ENCODE measurements at regions of chr10 and their contacts with region 1.

Region 1: DNA sequence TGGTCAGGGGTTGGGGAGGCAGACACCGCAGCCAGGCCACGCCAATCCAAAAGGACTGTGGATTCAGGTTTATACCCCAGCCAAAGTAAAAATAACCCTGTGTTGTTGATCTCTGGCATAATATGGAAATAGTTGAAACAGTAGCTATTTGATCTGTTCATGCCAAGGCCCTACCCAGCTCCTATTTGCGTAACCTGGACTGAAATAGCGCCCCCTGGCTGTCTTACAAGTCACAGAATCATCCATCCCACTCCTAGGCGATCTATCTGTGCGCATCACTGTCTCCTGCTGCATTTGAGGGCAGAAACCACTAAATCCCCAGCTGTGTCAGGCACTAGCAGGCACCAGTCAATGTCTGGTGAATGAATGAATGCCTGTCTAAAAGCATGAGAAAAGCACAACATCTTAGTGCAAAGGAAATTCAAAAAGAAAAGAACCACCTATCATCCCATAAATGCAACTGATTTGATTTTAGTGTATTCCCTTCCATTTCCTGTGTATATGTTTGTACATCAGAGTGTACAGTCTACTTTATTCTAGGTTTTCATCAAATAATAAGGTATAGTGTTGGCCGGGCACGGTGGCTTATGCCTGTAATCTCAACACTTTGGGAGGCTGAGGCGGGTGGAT is 160.0 kb downstream of the SLIT1 start:
- DNase-seq: peak; percentile 81
- ATAC-seq: peak; percentile 78
- H3K4me3 Mint-ChIP-seq: no peak overlapping the region
- H3K27ac Mint-ChIP-seq: no peak overlapping the region
- H3K4me1 Mint-ChIP-seq: peaks cover 5% of the 10 kb centered on the region
- H3K27me3 Mint-ChIP-seq: peaks cover 1% of the 10 kb centered on the region
- CTCF ChIP-seq: peak; percentile 78

Region 2: GRCh38 chr10:96765406-96766240 is 260.1 kb before region 1 on chr10:
- CTCF ChIA-PET with region 1: interaction called, 17 read pairs
- POLR2A ChIA-PET with region 1: no interaction called
- intact Hi-C with region 1: no loop called
- DNase-seq: peak; percentile 90
- ATAC-seq: peak; percentile 97
- H3K4me3 Mint-ChIP-seq: no peak overlapping the region
- H3K27ac Mint-ChIP-seq: no peak overlapping the region
- H3K4me1 Mint-ChIP-seq: no peaks in the 10 kb centered on the region
- H3K27me3 Mint-ChIP-seq: no peaks in the 10 kb centered on the region
- CTCF ChIP-seq: peak; percentile 93

Region 3: GRCh38 chr10:96960872-96961271 is 64.9 kb before region 1 on chr10:
- CTCF ChIA-PET with region 1: interaction called, 10 read pairs
- POLR2A ChIA-PET with region 1: no interaction called
- intact Hi-C with region 1: no loop called
- DNase-seq: peak; percentile 28
- ATAC-seq: peak; percentile 80
- H3K4me3 Mint-ChIP-seq: no peak overlapping the region
- H3K27ac Mint-ChIP-seq: peak overlapping the region; percentile 78
- H3K4me1 Mint-ChIP-seq: peaks cover 18% of the 10 kb centered on the region
- H3K27me3 Mint-ChIP-seq: no peaks in the 10 kb centered on the region
- CTCF ChIP-seq: no peak

Region 4: GRCh38 chr10:96984541-96985131 is 41.1 kb before region 1 on chr10:
- CTCF ChIA-PET with region 1: interaction called, 41 read pairs
- POLR2A ChIA-PET with region 1: no interaction called
- intact Hi-C with region 1: no loop called
- DNase-seq: peak; percentile 35
- ATAC-seq: peak; percentile 79
- H3K4me3 Mint-ChIP-seq: peak overlapping the region; percentile 36
- H3K27ac Mint-ChIP-seq: peak overlapping the region; percentile 26
- H3K4me1 Mint-ChIP-seq: peaks cover 11% of the 10 kb centered on the region
- H3K27me3 Mint-ChIP-seq: no peaks in the 10 kb centered on the region
- CTCF ChIP-seq: no peak

Region 5: DNA sequence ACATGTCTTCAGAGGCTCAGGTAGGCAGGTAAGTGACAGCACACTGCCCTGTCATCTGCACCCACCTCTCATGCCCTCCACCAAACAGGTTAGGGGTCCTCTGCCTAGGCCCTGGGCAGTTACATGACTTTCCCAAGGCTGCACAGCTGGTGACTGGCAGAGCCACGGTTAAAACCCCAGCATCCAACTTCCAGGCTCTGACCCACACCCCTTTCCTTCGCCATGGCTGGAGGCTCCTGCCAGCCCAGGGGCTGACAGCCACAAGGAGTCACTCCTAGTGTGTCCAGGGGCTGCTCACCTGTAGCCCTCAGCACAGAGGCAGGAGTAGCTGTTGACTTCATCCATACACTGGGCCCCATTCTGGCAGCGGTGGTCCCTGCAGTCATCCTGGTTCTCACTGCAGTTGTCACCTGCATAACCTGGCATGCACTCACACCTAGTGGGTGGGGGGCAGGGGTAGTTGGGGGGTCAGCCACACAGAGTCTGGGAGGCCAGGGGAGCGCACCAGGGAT is 15.0 kb before region 1 on chr10:
- CTCF ChIA-PET with region 1: interaction called, 27 read pairs
- POLR2A ChIA-PET with region 1: interaction called, 5 read pairs
- intact Hi-C with region 1: no loop called
- DNase-seq: no peak
- ATAC-seq: no peak
- H3K4me3 Mint-ChIP-seq: no peak overlapping the region
- H3K27ac Mint-ChIP-seq: no peak overlapping the region
- H3K4me1 Mint-ChIP-seq: no peaks in the 10 kb centered on the region
- H3K27me3 Mint-ChIP-seq: no peaks in the 10 kb centered on the region
- CTCF ChIP-seq: no peak

Region 6: DNA sequence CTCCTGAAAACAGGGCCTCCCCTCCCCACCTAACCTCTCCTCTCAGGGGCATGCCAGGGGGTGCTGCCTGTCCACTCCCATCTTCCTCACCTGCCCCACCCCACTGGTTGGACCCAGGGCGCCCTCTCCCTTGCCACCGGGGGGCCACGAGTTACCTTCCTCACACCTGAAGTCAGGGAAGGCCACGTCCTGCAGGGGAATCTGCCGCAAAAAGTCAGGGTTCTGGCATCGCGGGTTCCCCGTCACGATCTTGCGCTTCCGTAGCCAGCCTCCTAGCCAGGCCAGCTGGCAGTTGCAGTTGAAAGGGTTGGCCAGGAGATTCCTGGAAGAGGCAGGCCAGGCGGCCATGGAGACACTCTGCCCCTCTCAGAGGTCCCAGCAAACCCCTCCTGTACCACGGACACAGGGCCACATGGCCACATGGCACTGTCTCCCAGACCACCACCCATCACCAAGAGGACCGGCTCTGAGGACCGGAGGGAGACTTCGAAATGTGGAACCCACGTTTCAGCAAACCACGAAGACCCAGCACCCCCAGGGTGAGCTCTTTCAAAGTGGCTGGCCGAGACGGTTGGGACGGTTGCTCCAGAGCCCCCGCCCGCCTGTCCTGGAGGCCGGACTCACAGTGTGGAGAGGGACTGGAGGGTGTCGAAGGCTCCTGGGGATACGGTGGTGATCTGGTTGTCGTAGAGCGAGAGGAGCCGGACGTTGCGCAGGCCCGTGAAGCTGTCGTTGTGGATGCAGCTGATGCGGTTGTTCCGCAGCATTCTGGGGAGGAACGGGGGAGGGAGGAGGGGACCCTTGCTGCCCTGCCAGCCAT is 17.2 kb after region 1 on chr10:
- CTCF ChIA-PET with region 1: interaction called, 125 read pairs
- POLR2A ChIA-PET with region 1: no interaction called
- intact Hi-C with region 1: no loop called
- DNase-seq: no peak
- ATAC-seq: no peak
- H3K4me3 Mint-ChIP-seq: no peak overlapping the region
- H3K27ac Mint-ChIP-seq: no peak overlapping the region
- H3K4me1 Mint-ChIP-seq: no peaks in the 10 kb centered on the region
- H3K27me3 Mint-ChIP-seq: no peaks in the 10 kb centered on the region
- CTCF ChIP-seq: no peak

Region 7: DNA sequence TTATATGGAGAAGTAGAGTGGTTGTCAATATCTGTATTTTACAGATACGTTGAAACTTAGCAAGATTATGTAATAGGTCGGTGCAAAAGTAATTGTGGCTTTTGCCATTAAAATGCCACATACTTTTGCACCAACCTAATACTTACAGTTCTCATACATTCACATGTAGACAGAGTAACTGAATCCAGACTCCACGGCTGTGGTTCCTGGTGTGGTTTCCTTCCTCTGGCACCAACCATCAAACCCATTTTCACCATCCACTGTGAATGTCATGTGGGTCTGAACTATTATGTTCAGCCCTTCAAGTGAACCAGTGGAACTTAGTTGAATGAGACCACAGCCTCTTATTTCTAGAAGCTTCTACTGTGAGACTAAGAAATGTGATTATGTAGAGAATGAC is 191.6 kb after region 1 on chr10:
- CTCF ChIA-PET with region 1: interaction called, 14 read pairs
- POLR2A ChIA-PET with region 1: no interaction called
- intact Hi-C with region 1: no loop called
- DNase-seq: no peak
- ATAC-seq: no peak
- H3K4me3 Mint-ChIP-seq: no peak overlapping the region
- H3K27ac Mint-ChIP-seq: peak overlapping the region; percentile 94
- H3K4me1 Mint-ChIP-seq: peaks cover 29% of the 10 kb centered on the region
- H3K27me3 Mint-ChIP-seq: no peaks in the 10 kb centered on the region
- CTCF ChIP-seq: no peak

Measured in activated CD8-positive, alpha-beta T cell treated with anti-CD3 and anti-CD28 coated beads for 36 hours (primary cell).